Common myeloid progenitor, CD34-positive (primary cell): ENCODE measurements at regions of chr4 and their contacts with region 1.

Region 1: GRCh38 chr4:89657931-89658700 is 178.8 kb downstream of the SNCA start:
- DNase-seq: peak; percentile 42 to 63 (median 62)
- H3K4me3 ChIP-seq: no peak overlapping the region
- H3K27ac ChIP-seq: no peak overlapping the region
- H3K4me1 ChIP-seq: no peaks in the 10 kb centered on the region
- H3K27me3 ChIP-seq: no peaks in the 10 kb centered on the region

Region 2: DNA sequence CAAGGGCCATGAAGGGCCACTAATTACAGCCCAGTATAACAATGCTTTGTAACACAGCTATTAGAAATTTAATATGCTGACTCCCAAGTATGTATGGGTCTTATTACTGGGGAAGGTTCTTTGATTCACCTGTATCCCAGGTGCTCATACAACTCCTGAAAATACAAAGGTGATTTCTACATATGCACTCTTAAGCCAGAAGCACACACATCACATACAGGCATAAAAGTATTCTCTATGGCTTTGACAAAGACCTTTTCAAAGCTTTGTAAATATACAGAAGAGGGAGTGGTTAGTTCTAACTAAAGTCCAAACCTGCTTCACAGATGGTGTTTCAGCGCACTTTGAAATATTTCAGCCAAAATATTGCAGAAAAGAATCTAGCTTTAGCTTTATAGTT is 12.6 kb before region 1 on chr4:
- CTCF ChIA-PET with region 1: interaction called, 10 read pairs
- POLR2A ChIA-PET with region 1: no interaction called
- DNase-seq: no peak
- H3K4me3 ChIP-seq: no peak overlapping the region
- H3K27ac ChIP-seq: no peak overlapping the region
- H3K4me1 ChIP-seq: no peaks in the 10 kb centered on the region
- H3K27me3 ChIP-seq: no peaks in the 10 kb centered on the region

Region 3: GRCh38 chr4:89721016-89721415 is 62.9 kb after region 1 on chr4:
- CTCF ChIA-PET with region 1: no interaction called
- POLR2A ChIA-PET with region 1: no interaction called
- DNase-seq: no peak
- H3K4me3 ChIP-seq: no peak overlapping the region
- H3K27ac ChIP-seq: no peak overlapping the region
- H3K4me1 ChIP-seq: no peaks in the 10 kb centered on the region
- H3K27me3 ChIP-seq: no peaks in the 10 kb centered on the region